ENCODE measurements at regions of chr9 and their contacts with region 1.

Region 1: GRCh38 chr9:89549031-89549644 is 51.2 kb upstream of the SEMA4D start:
- DNase-seq: peak; percentile 56 to 93 (median 80)
- ATAC-seq: peak; percentile 89 to 100 (median 99)
- H3K4me3 ChIP-seq: no peak overlapping the region
- H3K27ac ChIP-seq: no peak overlapping the region
- H3K4me1 ChIP-seq: no peaks in the 10 kb centered on the region
- H3K27me3 ChIP-seq: no peaks in the 10 kb centered on the region
- CTCF ChIP-seq: peak; percentile 81 to 96 (median 86)

Region 2: DNA sequence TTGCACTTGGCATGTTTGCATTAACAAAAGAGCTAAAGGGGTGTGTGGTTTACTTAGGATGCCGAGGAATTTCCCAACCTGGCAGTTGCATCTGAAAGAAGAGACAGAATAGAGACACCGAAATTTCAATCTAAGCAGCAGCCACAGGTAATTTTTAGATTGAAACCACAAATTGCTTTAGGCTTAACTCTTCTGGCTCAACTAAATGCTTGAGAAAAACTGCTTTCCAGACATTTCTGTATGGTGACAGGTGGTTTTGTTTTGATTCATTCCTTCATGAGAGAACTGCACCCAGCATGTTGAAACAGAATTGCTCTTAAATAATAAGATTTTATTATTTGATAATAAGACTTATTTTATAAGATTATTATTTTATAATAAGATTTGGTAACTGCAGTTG is 209.3 kb before region 1 on chr9:
- intact Hi-C with region 1: loop called in 1 of 3 experiments (anchors 10 kb)
- DNase-seq: no peak
- ATAC-seq: no peak
- H3K4me3 ChIP-seq: no peak overlapping the region
- H3K27ac ChIP-seq: no peak overlapping the region
- H3K4me1 ChIP-seq: no peaks in the 10 kb centered on the region
- H3K27me3 ChIP-seq: no peaks in the 10 kb centered on the region
- CTCF ChIP-seq: no peak

Region 3: GRCh38 chr9:89405826-89406225 is 143.3 kb before region 1 on chr9:
- intact Hi-C with region 1: loop called in 1 of 3 experiments (anchors 10 kb)
- DNase-seq: peak in 1 of 6 donors; percentile 30
- ATAC-seq: peak in 2 of 4 donors; percentile 61 to 77
- H3K4me3 ChIP-seq: no peak overlapping the region
- H3K27ac ChIP-seq: no peak overlapping the region
- H3K4me1 ChIP-seq: no peaks in the 10 kb centered on the region
- H3K27me3 ChIP-seq: no peaks in the 10 kb centered on the region
- CTCF ChIP-seq: no peak

Region 4: DNA sequence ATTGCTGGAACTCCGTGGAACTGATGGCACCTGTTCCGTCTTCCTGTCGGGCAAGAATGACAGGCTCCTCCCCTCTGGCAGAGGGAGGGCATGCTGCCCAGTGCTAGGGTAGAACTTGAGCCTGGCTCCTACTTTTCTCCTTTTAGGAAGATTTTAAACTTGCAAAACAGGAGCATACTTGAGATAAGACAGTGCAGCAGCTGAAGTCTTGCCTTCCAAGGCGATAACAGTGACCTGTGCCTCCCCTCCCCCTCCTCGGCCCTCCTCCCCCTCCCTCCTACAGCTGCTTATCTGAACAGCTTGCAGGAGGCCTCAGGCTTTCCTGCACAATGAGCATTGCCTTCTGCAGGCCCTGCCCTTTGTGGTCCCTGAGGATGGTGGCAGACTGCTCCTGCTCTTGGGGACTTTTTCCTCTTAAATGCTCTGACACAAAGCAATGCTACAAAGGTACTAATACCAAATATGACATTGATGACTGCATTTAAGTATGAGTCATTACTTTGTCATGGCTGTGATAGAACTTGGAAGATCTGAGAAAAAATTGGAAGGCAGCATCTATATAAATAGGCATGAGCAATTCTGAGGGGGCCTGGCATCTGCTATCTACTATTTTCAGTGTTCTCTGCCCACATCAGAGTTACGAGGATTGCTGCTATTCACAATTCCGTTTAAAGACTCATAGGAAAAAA is 57.6 kb after region 1 on chr9:
- intact Hi-C with region 1: no loop called
- DNase-seq: peak in 4 of 6 donors; percentile 75 to 80 (median 78)
- ATAC-seq: peak; percentile 24 to 43 (median 35)
- H3K4me3 ChIP-seq: peak overlapping the region; percentile 83 to 97 (median 92)
- H3K27ac ChIP-seq: peak overlapping the region; percentile 68 to 94 (median 86)
- H3K4me1 ChIP-seq: peaks cover 5 to 16% (median 15%) of the 10 kb centered on the region in 3 donors
- H3K27me3 ChIP-seq: no peaks in the 10 kb centered on the region
- CTCF ChIP-seq: no peak